ENCODE measurements at regions of chr5 and their contacts with region 1.

Region 1: DNA sequence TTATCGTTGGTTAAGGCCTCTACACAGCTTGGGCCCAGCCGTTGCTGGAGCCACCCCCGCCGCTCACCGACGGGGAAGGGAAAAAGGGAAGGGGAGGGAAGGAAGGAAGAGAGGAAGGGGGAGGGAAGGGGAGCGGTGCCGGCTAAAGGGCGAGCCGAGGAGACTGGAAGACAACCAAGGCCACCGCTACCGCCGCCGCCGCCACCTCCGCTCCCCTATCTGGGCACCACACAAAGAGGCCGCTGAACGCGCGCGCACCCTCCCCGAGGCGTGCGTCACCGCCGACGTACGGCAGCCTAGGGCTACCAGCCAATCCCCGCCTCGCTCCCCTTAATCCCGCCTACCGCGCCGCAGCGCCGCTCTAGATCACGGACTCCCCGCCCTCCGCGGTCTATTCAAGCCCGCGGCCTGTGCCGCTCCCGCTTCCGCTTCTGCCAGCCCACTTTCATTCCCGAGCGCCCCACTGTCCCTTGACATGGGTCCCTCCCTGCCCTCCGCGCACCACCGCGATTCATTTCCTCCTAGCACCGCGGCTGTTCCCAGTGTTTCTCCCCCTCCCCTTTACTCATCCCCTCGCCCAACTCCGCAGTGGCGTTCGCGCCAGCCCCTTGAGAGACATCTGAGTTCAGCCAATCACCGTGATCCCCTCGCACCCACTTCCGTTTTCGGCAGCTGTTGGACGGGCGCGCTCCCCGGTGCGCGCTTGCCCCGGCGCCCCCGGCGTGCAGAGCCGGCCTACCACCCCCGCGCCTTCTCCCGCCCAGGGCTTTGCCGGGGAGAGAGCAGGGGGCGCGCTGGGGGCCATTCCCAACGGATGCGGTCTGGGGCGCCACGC is at the start of gene HNRNPA0:
- DNase-seq: peak; percentile 97
- ATAC-seq: peak; percentile 84
- H3K4me3 Mint-ChIP-seq: peak within 1 kb of the TSS; percentile 91
- H3K27ac Mint-ChIP-seq: peak within 1 kb of the TSS; percentile 100
- H3K4me1 Mint-ChIP-seq: peaks cover 25% of the 10 kb centered on the region
- H3K27me3 Mint-ChIP-seq: peaks cover 2% of the 10 kb centered on the region
- total RNA-seq, gene HNRNPA0: 31.4 to 31.7 TPM

Region 2: GRCh38 chr5:137665678-137666460 is 88.5 kb before region 1 on chr5:
- POLR2A ChIA-PET with region 1: interaction called, 15 read pairs
- DNase-seq: peak; percentile 47
- ATAC-seq: peak; percentile 100
- H3K4me3 Mint-ChIP-seq: peak overlapping the region; percentile 47
- H3K27ac Mint-ChIP-seq: peak overlapping the region; percentile 71
- H3K4me1 Mint-ChIP-seq: peaks cover 27% of the 10 kb centered on the region
- H3K27me3 Mint-ChIP-seq: no peaks in the 10 kb centered on the region

Region 3: DNA sequence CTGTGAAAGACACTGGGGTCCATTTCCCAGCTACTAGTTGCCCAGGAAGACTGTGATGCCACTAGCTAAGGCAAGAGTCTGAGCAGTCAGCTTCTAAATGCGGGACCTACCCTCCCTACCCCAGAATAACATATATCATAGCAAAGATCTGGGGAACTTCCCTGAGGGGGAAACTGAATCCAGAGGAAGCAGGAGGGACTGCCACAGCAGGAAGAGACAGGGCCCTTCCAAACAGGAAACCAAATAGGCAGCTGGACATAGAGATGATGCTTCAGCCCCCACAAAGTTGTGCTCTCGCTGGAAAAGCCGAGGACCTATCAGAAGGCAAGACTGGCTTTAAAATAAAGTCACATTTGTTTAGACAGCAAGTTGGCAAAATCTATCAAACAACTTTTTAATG is 69.6 kb before region 1 on chr5:
- POLR2A ChIA-PET with region 1: no interaction called
- DNase-seq: no peak
- ATAC-seq: no peak
- H3K4me3 Mint-ChIP-seq: no peak overlapping the region
- H3K27ac Mint-ChIP-seq: no peak overlapping the region
- H3K4me1 Mint-ChIP-seq: no peaks in the 10 kb centered on the region
- H3K27me3 Mint-ChIP-seq: no peaks in the 10 kb centered on the region

Region 4: GRCh38 chr5:137695651-137696428 is 58.5 kb before region 1 on chr5:
- POLR2A ChIA-PET with region 1: interaction called, 16 read pairs
- DNase-seq: peak; percentile 49
- ATAC-seq: peak; percentile 75
- H3K4me3 Mint-ChIP-seq: peak overlapping the region; percentile 61
- H3K27ac Mint-ChIP-seq: peak overlapping the region; percentile 92
- H3K4me1 Mint-ChIP-seq: peaks cover 27% of the 10 kb centered on the region
- H3K27me3 Mint-ChIP-seq: no peaks in the 10 kb centered on the region

Region 5: GRCh38 chr5:137735555-137736284 is 18.6 kb before region 1 on chr5 and contains the start of gene KLHL3:
- POLR2A ChIA-PET with region 1: interaction called, 47 read pairs
- DNase-seq: peak; percentile 64
- ATAC-seq: peak; percentile 57
- H3K4me3 Mint-ChIP-seq: no peak within 1 kb of the TSS
- H3K27ac Mint-ChIP-seq: no peak within 1 kb of the TSS
- H3K4me1 Mint-ChIP-seq: peaks cover 38% of the 10 kb centered on the region
- H3K27me3 Mint-ChIP-seq: no peaks in the 10 kb centered on the region
- total RNA-seq, gene KLHL3: 16.3 to 21.2 TPM

Region 6: DNA sequence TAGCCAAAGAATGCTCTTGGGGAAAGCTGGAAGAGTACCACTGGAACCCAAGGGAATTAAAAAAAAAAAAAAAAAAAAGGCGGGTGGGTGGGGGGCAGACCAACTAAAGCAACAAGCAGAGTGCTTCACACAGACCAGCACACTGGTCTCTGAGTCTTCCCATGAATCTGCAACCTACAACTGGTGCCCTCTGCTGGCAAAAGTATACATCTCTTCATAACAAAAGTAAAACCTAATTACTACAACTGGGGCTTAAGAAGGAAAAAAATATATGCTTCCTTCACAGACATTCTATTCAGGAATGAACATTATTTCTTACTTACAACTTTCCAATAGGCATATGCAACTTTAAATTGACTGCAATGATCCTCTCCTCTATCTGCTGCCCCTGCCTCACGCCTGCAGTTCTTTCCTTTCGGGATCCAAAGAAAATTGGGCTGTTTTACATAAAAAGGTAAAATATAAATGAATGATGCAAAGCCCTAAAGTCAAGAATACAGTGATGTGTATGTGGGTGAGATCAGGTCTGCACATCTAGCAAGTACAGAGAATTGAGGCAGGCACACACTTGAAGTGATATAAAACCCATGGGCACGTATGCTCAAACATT is 11.2 kb before region 1 on chr5:
- POLR2A ChIA-PET with region 1: interaction called, 47 read pairs
- DNase-seq: peak; percentile 34
- ATAC-seq: peak; percentile 83
- H3K4me3 Mint-ChIP-seq: no peak overlapping the region
- H3K27ac Mint-ChIP-seq: no peak overlapping the region
- H3K4me1 Mint-ChIP-seq: peaks cover 10% of the 10 kb centered on the region
- H3K27me3 Mint-ChIP-seq: no peaks in the 10 kb centered on the region

Region 7: DNA sequence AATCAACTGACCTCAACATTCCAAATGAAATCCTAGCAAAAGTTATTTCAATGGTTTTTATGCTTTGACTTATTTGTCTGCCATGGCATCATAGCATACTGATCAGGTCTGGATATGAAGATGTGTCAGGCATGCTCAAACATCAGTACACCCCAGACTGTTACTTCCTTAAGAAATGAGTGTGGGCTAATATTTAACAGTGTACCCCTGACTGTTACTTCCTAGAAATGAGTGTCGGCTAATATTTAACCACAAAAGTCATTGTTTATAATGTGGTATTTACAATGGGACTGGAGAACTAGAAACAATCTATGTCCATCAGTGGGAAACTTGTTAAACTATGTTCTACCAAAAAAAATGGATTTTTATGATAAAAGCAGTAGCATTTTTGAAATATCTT is 38.0 kb after region 1 on chr5:
- POLR2A ChIA-PET with region 1: no interaction called
- DNase-seq: no peak
- ATAC-seq: no peak
- H3K4me3 Mint-ChIP-seq: no peak overlapping the region
- H3K27ac Mint-ChIP-seq: no peak overlapping the region
- H3K4me1 Mint-ChIP-seq: no peaks in the 10 kb centered on the region
- H3K27me3 Mint-ChIP-seq: peaks cover 4% of the 10 kb centered on the region

Region 8: GRCh38 chr5:137888857-137889759 is 134.8 kb after region 1 on chr5 and contains the start of gene PKD2L2:
- POLR2A ChIA-PET with region 1: interaction called, 11 read pairs
- DNase-seq: peak; percentile 87
- ATAC-seq: peak; percentile 99
- H3K4me3 Mint-ChIP-seq: peak within 1 kb of the TSS; percentile 82
- H3K27ac Mint-ChIP-seq: peak within 1 kb of the TSS; percentile 89
- H3K4me1 Mint-ChIP-seq: peaks cover 16% of the 10 kb centered on the region
- H3K27me3 Mint-ChIP-seq: peaks cover 3% of the 10 kb centered on the region
- total RNA-seq, gene PKD2L2: not detected